ENCODE measurements at regions of chr15 and their contacts with region 1.

Region 1: GRCh38 chr15:99282121-99282520 is 30.8 kb downstream of the LRRC28 start:
- DNase-seq: no peak
- H3K4me3 ChIP-seq: no peak overlapping the region
- H3K27ac ChIP-seq: no peak overlapping the region
- H3K4me1 ChIP-seq: no peaks in the 10 kb centered on the region
- H3K27me3 ChIP-seq: no peaks in the 10 kb centered on the region
- CTCF ChIP-seq: no peak
- POLR2A ChIP-seq: no peak

Region 2: GRCh38 chr15:98914626-98915025 is 367.5 kb before region 1 on chr15:
- intact Hi-C with region 1: no loop called
- DNase-seq: peak; percentile 68 to 73
- H3K4me3 ChIP-seq: no peak overlapping the region
- H3K27ac ChIP-seq: peak overlapping the region; percentile 92 to 95 (median 93)
- H3K4me1 ChIP-seq: peaks cover 55 to 63% of the 10 kb centered on the region in 2 donors
- H3K27me3 ChIP-seq: no peaks in the 10 kb centered on the region
- CTCF ChIP-seq: peak in 1 of 6 experiments; percentile 24
- POLR2A ChIP-seq: peak in 1 of 2 donors; percentile 31

Region 3: GRCh38 chr15:99361541-99362185 is 79.5 kb after region 1 on chr15:
- intact Hi-C with region 1: loop called (anchors 5 kb)
- DNase-seq: no peak
- H3K4me3 ChIP-seq: no peak overlapping the region
- H3K27ac ChIP-seq: no peak overlapping the region
- H3K4me1 ChIP-seq: no peaks in the 10 kb centered on the region
- H3K27me3 ChIP-seq: no peaks in the 10 kb centered on the region
- CTCF ChIP-seq: peak; percentile 10 to 66 (median 48)
- POLR2A ChIP-seq: no peak

Region 4: DNA sequence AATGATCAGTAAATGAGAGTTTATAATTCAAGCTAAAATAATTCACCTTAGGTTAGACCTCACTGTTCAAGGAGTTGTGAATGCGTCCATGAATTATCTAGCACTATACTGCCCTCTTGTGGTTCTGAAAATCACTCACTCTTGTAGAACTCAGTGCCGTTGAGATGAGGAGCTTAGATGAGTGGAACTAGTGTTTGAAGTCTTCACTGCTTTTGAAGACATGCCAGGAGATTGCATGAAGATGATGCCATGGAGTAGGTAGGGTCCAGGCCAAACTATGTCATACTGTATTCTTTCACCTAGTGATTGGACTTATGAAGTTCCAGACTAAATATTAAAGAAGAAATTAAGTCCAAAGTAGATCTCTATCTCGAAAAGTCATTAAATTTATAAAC is 422.3 kb after region 1 on chr15:
- intact Hi-C with region 1: loop called (anchors 10 kb)
- DNase-seq: no peak
- H3K4me3 ChIP-seq: no peak overlapping the region
- H3K27ac ChIP-seq: peak overlapping the region in 2 of 3 donors; percentile 45 to 71
- H3K4me1 ChIP-seq: peaks cover 16 to 32% of the 10 kb centered on the region in 2 donors
- H3K27me3 ChIP-seq: no peaks in the 10 kb centered on the region
- CTCF ChIP-seq: peak; percentile 45 to 86 (median 72)
- POLR2A ChIP-seq: no peak